GM10248 (cell line): ENCODE measurements at regions of chr6 and their contacts with region 1.

Region 1: DNA sequence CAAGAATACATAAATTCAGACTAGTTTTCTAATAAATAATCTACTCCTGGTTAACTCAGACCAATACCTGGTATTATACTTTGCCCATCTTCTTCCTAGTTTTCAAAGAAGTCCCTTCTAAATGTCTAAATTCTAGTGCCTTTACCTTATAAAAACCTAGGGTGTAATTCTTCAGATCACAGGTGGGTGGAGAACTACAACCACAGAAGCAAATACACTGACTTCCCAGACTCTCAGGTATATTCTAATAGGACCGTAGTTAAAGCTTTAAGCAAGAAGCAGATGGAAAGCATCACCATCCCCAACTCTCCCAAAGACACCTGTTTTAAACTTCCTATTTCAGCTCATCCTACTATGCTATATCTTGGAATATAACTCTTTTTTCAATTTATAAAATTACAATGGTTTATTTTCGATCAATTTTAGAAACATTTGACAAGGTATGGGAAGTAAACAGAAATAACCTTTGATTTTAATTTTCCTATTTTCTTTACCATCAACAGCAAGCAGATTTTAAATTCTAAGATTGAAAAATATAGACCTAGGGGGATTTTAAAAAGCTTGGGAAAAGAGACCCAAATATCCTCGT is 15.8 kb downstream of the MAN1A1 start:
- DNase-seq: peak; percentile 26
- CTCF ChIP-seq: peak; percentile 47

Region 2: GRCh38 chr6:118810420-118811027 is 523.3 kb before region 1 on chr6:
- CTCF ChIA-PET with region 1: no interaction called
- POLR2A ChIA-PET with region 1: no interaction called
- DNase-seq: peak; percentile 32
- CTCF ChIP-seq: no peak

Region 3: GRCh38 chr6:119347466-119348095 is 13.8 kb after region 1 on chr6:
- CTCF ChIA-PET with region 1: interaction called, 20 read pairs
- POLR2A ChIA-PET with region 1: interaction called, 6 read pairs
- DNase-seq: peak; percentile 48
- CTCF ChIP-seq: no peak

Region 4: GRCh38 chr6:119566546-119567260 is 232.9 kb after region 1 on chr6:
- CTCF ChIA-PET with region 1: no interaction called
- POLR2A ChIA-PET with region 1: no interaction called
- DNase-seq: no peak
- CTCF ChIP-seq: no peak